B cell (primary cell): ENCODE measurements at regions of chr2 and their contacts with region 1.

Region 1: GRCh38 chr2:200811336-200812121 is at the start of gene BZW1:
- DNase-seq: peak; percentile 99
- ATAC-seq: peak; percentile 80
- H3K4me3 ChIP-seq: peak within 1 kb of the TSS; percentile 75 to 93 (median 92)
- H3K4me3 Mint-ChIP-seq: peak within 1 kb of the TSS; percentile 94
- H3K27ac ChIP-seq: peak within 1 kb of the TSS; percentile 99
- H3K27ac Mint-ChIP-seq: peak within 1 kb of the TSS; percentile 99
- H3K4me1 ChIP-seq: peaks cover 19 to 24% of the 10 kb centered on the region in 2 donors
- H3K4me1 Mint-ChIP-seq: peaks cover 39% of the 10 kb centered on the region
- H3K27me3 ChIP-seq: no peaks in the 10 kb centered on the region
- H3K27me3 Mint-ChIP-seq: no peaks in the 10 kb centered on the region
- CTCF ChIP-seq: no peak
- total RNA-seq, gene BZW1: 109 and 120 TPM in 2 replicates

Region 2: GRCh38 chr2:200578778-200579177 is 232.8 kb before region 1 on chr2:
- CTCF ChIA-PET with region 1: no interaction called
- POLR2A ChIA-PET with region 1: no interaction called
- intact Hi-C with region 1: loop called (anchors 5 kb)
- DNase-seq: peak; percentile 38
- ATAC-seq: peak; percentile 31
- H3K4me3 ChIP-seq: no peak overlapping the region
- H3K4me3 Mint-ChIP-seq: no peak overlapping the region
- H3K27ac ChIP-seq: no peak overlapping the region
- H3K27ac Mint-ChIP-seq: no peak overlapping the region
- H3K4me1 ChIP-seq: no peaks in the 10 kb centered on the region
- H3K4me1 Mint-ChIP-seq: no peaks in the 10 kb centered on the region
- H3K27me3 ChIP-seq: peaks cover 0 to 5% (median 0%) of the 10 kb centered on the region in 4 experiments
- H3K27me3 Mint-ChIP-seq: no peaks in the 10 kb centered on the region
- CTCF ChIP-seq: peak; percentile 46

Region 3: GRCh38 chr2:200864176-200864976 is 52.8 kb after region 1 on chr2 and contains the start of gene CLK1:
- CTCF ChIA-PET with region 1: interaction called, 3 read pairs
- POLR2A ChIA-PET with region 1: interaction called, 24 read pairs
- intact Hi-C with region 1: loop called (anchors 1 kb)
- DNase-seq: peak; percentile 97
- ATAC-seq: peak; percentile 85
- H3K4me3 ChIP-seq: peak within 1 kb of the TSS; percentile 85 to 100 (median 97)
- H3K4me3 Mint-ChIP-seq: peak within 1 kb of the TSS; percentile 93
- H3K27ac ChIP-seq: peak within 1 kb of the TSS; percentile 98 to 99
- H3K27ac Mint-ChIP-seq: peak within 1 kb of the TSS; percentile 100
- H3K4me1 ChIP-seq: peaks cover 27 to 31% of the 10 kb centered on the region in 2 donors
- H3K4me1 Mint-ChIP-seq: peaks cover 41% of the 10 kb centered on the region
- H3K27me3 ChIP-seq: no peaks in the 10 kb centered on the region
- H3K27me3 Mint-ChIP-seq: no peaks in the 10 kb centered on the region
- CTCF ChIP-seq: no peak
- total RNA-seq, gene CLK1: 396 and 409 TPM in 2 replicates

Region 4: DNA sequence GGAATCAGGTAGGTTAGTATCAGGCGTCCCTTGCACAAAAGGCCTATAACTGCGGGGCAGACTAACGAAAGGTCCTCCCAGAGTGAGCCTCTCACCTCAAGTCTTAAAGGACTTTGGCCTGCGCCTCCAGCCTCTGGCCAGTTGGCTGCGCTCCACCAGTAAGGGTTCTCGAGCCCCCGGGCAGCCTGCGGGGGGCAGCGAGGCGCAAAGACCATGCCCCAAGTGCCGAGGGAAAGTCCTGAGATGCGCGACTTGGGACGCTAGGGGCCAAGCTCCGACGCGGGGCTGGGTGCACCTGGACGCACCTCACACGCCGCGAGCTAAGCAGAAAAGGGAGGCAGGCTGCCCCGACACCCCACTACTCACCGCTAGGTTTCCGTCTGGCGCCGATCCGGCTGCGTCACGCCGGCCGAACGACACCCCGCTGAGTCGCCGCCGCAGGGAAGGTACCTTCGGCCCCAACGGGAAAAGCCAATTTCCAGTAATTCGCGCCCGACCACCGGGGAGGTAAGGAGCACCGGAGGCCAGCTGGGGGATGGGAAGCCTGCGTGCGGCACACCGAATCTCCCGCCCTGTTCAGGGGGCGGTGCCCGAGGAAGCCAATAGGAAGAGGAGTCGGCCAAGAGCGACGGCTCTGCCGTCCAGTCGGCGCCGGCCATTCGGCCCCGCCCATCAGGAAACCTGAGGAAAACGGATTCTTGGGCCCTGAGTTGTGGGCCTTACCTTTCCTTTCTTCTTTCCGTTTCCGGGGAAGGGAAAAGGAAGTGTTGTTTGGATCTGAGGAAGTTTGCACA is 151.8 kb after region 1 on chr2 and contains the start of gene ORC2:
- CTCF ChIA-PET with region 1: no interaction called
- POLR2A ChIA-PET with region 1: no interaction called
- intact Hi-C with region 1: loop called (anchors 1 kb)
- DNase-seq: peak; percentile 97
- ATAC-seq: peak; percentile 92
- H3K4me3 ChIP-seq: peak within 1 kb of the TSS; percentile 77 to 97 (median 90)
- H3K4me3 Mint-ChIP-seq: peak within 1 kb of the TSS; percentile 92
- H3K27ac ChIP-seq: peak within 1 kb of the TSS; percentile 90 to 92
- H3K27ac Mint-ChIP-seq: peak within 1 kb of the TSS; percentile 98
- H3K4me1 ChIP-seq: peaks cover 28 to 30% of the 10 kb centered on the region in 2 donors
- H3K4me1 Mint-ChIP-seq: peaks cover 53% of the 10 kb centered on the region
- H3K27me3 ChIP-seq: no peaks in the 10 kb centered on the region
- H3K27me3 Mint-ChIP-seq: no peaks in the 10 kb centered on the region
- CTCF ChIP-seq: peak; percentile 77
- total RNA-seq, gene ORC2: 50.6 and 63.6 TPM in 2 replicates

Region 5: DNA sequence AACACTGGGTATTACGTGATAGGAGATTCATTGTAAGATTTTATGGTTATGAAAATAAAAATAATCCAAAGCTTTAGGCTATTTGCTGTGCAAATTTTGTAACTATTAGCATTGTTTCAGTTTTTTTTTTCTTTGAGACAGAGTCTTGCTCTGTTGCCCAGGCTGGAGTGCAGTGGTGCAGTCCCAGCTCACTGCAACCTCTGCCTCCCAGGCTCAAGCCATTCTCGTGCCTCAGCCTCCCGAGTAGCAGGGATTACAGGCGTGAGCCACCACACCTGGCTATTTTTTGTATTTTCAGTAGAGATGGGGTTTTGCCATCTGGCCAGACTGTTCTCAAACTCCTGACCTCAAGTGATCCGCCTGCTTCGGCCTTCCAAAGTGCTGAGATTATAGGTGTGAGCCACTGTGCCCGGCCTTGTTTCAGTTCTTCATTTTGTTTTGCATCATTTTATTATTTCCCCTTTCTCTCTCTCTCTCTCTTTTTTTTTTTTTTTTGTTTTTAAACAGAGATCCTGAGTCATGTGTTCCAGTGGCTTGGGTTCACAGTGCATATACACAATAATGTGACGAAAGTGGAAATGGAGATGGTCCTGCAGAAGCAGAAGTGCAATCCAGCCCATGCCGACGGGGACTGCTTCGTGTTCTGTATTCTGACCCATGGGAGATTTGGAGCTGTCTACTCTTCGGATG is 397.2 kb after region 1 on chr2:
- CTCF ChIA-PET with region 1: no interaction called
- POLR2A ChIA-PET with region 1: no interaction called
- intact Hi-C with region 1: loop called (anchors 10 kb)
- DNase-seq: peak; percentile 90
- ATAC-seq: peak; percentile 85
- H3K4me3 ChIP-seq: peak overlapping the region in 3 of 5 experiments; percentile 8 to 40 (median 31)
- H3K4me3 Mint-ChIP-seq: peak overlapping the region; percentile 68
- H3K27ac ChIP-seq: peak overlapping the region; percentile 60 to 76
- H3K27ac Mint-ChIP-seq: peak overlapping the region; percentile 94
- H3K4me1 ChIP-seq: peaks cover 34 to 42% of the 10 kb centered on the region in 2 donors
- H3K4me1 Mint-ChIP-seq: peaks cover 58% of the 10 kb centered on the region
- H3K27me3 ChIP-seq: no peaks in the 10 kb centered on the region
- H3K27me3 Mint-ChIP-seq: no peaks in the 10 kb centered on the region
- CTCF ChIP-seq: no peak

Region 6: GRCh38 chr2:201383156-201383555 is 571.6 kb after region 1 on chr2:
- CTCF ChIA-PET with region 1: no interaction called
- POLR2A ChIA-PET with region 1: no interaction called
- intact Hi-C with region 1: no loop called
- DNase-seq: no peak
- ATAC-seq: no peak
- H3K4me3 ChIP-seq: no peak overlapping the region
- H3K4me3 Mint-ChIP-seq: no peak overlapping the region
- H3K27ac ChIP-seq: no peak overlapping the region
- H3K27ac Mint-ChIP-seq: no peak overlapping the region
- H3K4me1 ChIP-seq: no peaks in the 10 kb centered on the region
- H3K4me1 Mint-ChIP-seq: no peaks in the 10 kb centered on the region
- H3K27me3 ChIP-seq: no peaks in the 10 kb centered on the region
- H3K27me3 Mint-ChIP-seq: no peaks in the 10 kb centered on the region
- CTCF ChIP-seq: no peak

Region 7: DNA sequence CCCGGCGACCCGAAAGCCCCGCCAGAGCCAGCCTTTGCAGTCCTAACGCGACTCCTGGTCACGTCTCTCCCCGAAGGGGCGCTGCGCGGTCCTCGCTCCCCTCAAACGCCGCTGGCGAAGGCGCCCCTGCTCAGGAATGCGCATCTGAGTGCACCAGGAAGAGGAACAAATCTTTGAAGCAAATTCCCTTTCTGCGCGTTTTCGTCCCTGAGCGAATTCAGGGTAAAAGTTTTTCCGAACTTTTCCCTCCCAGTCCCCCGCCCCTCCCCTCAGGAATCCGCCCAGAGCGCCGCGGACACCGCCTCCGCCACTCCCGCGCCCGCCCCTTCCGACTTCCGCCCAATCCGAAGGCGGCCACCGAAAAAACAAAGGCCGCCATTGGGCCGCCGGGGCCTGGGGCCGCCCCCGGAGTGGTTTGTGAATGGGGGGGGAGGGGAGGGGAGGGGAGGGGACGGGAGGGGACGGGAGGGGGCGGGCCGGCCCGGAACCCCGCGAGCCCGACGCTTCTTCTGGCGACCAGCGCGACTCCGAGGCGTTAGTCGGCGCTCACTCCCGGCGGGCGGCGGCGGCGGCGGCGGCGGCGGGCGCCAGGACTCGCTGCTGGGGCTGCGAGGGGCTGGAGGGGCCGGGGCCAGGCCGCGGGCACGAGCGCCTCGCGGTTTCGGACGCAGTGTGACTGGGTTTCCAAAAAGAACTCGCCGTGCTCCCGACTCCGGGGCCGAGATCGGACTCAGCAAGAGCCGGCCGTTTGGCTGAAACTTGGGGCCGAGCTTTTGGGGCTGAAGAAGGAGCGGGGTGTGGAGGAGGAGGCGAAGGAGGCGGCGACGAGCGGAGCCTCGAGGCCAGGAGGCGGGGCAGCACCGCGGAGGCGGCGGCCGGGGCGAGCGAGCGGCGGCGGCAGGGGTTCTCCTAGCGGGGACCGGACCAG is 1222.1 kb after region 1 on chr2 and contains the start of gene FZD7:
- CTCF ChIA-PET with region 1: no interaction called
- POLR2A ChIA-PET with region 1: no interaction called
- intact Hi-C with region 1: loop called (anchors 5 kb)
- DNase-seq: peak; percentile 90
- ATAC-seq: peak; percentile 85
- H3K4me3 ChIP-seq: peak within 1 kb of the TSS; percentile 63 to 89 (median 75)
- H3K4me3 Mint-ChIP-seq: peak within 1 kb of the TSS; percentile 91
- H3K27ac ChIP-seq: no peak within 1 kb of the TSS
- H3K27ac Mint-ChIP-seq: peak within 1 kb of the TSS; percentile 78
- H3K4me1 ChIP-seq: peaks cover 20 to 25% of the 10 kb centered on the region in 2 donors
- H3K4me1 Mint-ChIP-seq: peaks cover 13% of the 10 kb centered on the region
- H3K27me3 ChIP-seq: peaks cover 0 to 43% (median 32%) of the 10 kb centered on the region in 4 experiments
- H3K27me3 Mint-ChIP-seq: peaks cover 22% of the 10 kb centered on the region
- CTCF ChIP-seq: no peak
- total RNA-seq, gene FZD7: 2.1 TPM in 2 replicates